Prostate gland (tissue), 2 donors: ENCODE measurements at regions of chr10 and their contacts with region 1.

Region 1: GRCh38 chr10:13659897-13660550 is 73.3 kb downstream of the PRPF18 start:
- DNase-seq: peak; percentile 30
- H3K4me3 ChIP-seq: no peak overlapping the region
- H3K27ac ChIP-seq: peak overlapping the region in 1 of 2 donors; percentile 42
- H3K4me1 ChIP-seq: no peaks in the 10 kb centered on the region
- H3K27me3 ChIP-seq: no peaks in the 10 kb centered on the region
- CTCF ChIP-seq: peak; percentile 72 to 96 (median 93)
- POLR2A ChIP-seq: no peak

Region 2: GRCh38 chr10:13613519-13613918 is 46.5 kb before region 1 on chr10:
- intact Hi-C with region 1: loop called (anchors 2 kb)
- DNase-seq: peak; percentile 9
- H3K4me3 ChIP-seq: no peak overlapping the region
- H3K27ac ChIP-seq: no peak overlapping the region
- H3K4me1 ChIP-seq: peaks cover 3% of the 10 kb centered on the region
- H3K27me3 ChIP-seq: no peaks in the 10 kb centered on the region
- CTCF ChIP-seq: peak in 3 of 4 experiments; percentile 23 to 54 (median 45)
- POLR2A ChIP-seq: no peak

Region 3: DNA sequence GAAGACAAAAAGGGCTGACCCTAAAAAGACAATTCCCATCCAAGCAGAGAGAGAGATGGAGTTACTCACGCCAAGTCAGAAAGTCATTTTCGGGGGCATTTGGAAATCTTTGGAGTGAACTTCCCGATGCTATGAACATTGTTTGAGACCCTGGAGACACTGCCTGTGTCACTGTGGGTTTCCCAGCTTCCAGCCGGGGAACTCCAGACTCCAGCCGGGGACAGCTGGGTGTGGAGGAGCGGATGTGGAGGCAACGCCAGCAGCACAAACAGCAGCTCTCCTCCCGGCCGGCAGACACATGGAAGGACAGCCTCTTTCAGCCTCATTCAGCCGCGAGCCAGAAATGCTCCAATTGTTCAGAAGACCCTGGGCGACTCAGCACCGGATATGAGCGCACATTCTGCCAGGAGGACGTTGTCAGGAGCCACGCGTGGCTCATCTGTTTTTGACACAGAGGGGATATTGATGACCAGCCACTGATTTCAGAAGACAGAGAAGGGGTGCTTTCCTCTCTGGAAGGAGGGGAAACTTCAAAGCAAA is 24.3 kb after region 1 on chr10:
- intact Hi-C with region 1: no loop called
- DNase-seq: peak; percentile 27
- H3K4me3 ChIP-seq: no peak overlapping the region
- H3K27ac ChIP-seq: peak overlapping the region; percentile 30 to 36
- H3K4me1 ChIP-seq: peaks cover 7% of the 10 kb centered on the region
- H3K27me3 ChIP-seq: no peaks in the 10 kb centered on the region
- CTCF ChIP-seq: no peak
- POLR2A ChIP-seq: no peak

Region 4: GRCh38 chr10:13776861-13777311 is 116.9 kb after region 1 on chr10:
- intact Hi-C with region 1: loop called (anchors 2 kb)
- DNase-seq: no peak
- H3K4me3 ChIP-seq: no peak overlapping the region
- H3K27ac ChIP-seq: no peak overlapping the region
- H3K4me1 ChIP-seq: no peaks in the 10 kb centered on the region
- H3K27me3 ChIP-seq: no peaks in the 10 kb centered on the region
- CTCF ChIP-seq: no peak
- POLR2A ChIP-seq: no peak

Region 5: DNA sequence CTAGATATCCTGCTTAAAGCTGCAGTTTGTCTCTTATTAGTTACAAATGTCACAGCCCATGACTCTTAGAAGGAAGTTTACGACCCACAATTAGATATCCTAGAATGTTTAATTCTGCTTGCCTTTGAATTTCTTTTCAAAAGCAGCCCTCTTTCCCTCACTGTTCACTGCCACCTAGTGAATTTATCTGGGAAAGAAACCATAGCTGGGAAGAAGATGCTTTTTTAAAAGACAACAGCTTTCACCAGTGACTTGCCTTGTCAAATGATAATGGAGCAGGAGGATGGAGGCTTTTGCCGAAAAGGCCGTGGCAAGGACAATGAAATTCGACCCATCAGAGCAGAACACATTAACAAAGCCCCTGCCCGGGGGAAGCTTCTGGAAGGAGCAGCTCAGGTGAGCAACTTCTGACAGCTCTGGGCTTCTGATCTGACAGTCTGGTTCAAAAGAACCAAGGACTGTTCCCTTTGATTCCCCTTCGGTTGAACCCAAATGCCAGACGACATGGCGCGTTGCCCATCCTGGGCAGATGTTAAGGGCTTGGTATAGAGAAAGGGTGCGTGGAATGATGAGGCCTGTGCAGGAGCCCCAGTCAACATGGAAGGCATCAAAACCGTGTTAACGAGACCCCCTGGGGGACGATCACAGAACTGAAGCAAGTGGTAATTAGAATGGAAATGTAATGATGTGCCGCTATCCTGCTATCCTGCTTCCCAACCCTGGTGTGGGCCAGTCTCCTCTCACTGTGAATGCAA is 433.9 kb after region 1 on chr10:
- intact Hi-C with region 1: loop called (anchors 10 kb)
- DNase-seq: no peak
- H3K4me3 ChIP-seq: no peak overlapping the region
- H3K27ac ChIP-seq: no peak overlapping the region
- H3K4me1 ChIP-seq: no peaks in the 10 kb centered on the region
- H3K27me3 ChIP-seq: no peaks in the 10 kb centered on the region
- CTCF ChIP-seq: peak; percentile 13 to 50 (median 37)
- POLR2A ChIP-seq: no peak